ENCODE measurements at regions of chr20 and their contacts with region 1.

Region 1: GRCh38 chr20:36273414-36274180 is 32.5 kb upstream of the DLGAP4 start:
- DNase-seq: peak; percentile 46
- H3K4me3 Mint-ChIP-seq: no peak overlapping the region
- H3K27ac Mint-ChIP-seq: no peak overlapping the region
- H3K4me1 Mint-ChIP-seq: no peaks in the 10 kb centered on the region
- H3K27me3 Mint-ChIP-seq: peaks cover 92% of the 10 kb centered on the region
- CTCF ChIP-seq: peak; percentile 58

Region 2: GRCh38 chr20:36334296-36335205 is 61.0 kb after region 1 on chr20:
- CTCF ChIA-PET with region 1: no interaction called
- intact Hi-C with region 1: no loop called
- DNase-seq: no peak
- H3K4me3 Mint-ChIP-seq: no peak overlapping the region
- H3K27ac Mint-ChIP-seq: no peak overlapping the region
- H3K4me1 Mint-ChIP-seq: no peaks in the 10 kb centered on the region
- H3K27me3 Mint-ChIP-seq: peaks cover 87% of the 10 kb centered on the region
- CTCF ChIP-seq: no peak

Region 3: DNA sequence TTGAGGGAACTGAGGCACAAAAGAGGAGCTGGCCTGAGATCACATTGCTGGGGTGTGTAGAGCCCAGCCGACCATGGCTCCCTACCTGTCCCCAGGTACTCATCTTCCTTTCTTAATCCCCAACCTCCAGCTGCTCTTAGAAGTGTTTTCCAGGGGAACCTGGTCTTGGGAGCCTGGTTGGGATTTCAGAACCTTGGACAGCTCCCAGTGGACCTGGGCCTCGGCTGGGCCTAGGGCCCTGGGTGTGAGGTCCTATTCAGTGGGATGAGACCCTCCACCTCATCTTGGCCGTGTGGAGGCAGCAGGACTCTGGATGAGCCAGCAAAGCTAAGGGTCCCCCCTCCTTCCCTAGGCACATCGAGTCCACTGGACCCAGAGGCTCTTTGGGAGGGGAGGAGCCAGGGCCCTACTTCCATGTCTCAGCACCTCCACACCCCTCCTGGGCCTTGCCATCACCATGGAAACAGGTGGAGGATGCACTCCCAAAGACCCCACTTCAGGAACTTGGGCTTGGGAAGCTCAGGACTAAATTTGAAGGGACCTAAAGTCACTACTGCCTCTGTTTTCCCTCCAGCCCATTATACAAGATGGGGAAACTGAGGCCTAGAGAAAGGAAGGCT is 71.0 kb after region 1 on chr20:
- CTCF ChIA-PET with region 1: no interaction called
- intact Hi-C with region 1: no loop called
- DNase-seq: peak; percentile 67
- H3K4me3 Mint-ChIP-seq: no peak overlapping the region
- H3K27ac Mint-ChIP-seq: no peak overlapping the region
- H3K4me1 Mint-ChIP-seq: no peaks in the 10 kb centered on the region
- H3K27me3 Mint-ChIP-seq: peaks cover 91% of the 10 kb centered on the region
- CTCF ChIP-seq: no peak

Region 4: GRCh38 chr20:36399147-36399968 is 125.8 kb after region 1 on chr20:
- CTCF ChIA-PET with region 1: interaction called, 21 read pairs
- intact Hi-C with region 1: no loop called
- DNase-seq: peak; percentile 77
- H3K4me3 Mint-ChIP-seq: no peak overlapping the region
- H3K27ac Mint-ChIP-seq: no peak overlapping the region
- H3K4me1 Mint-ChIP-seq: no peaks in the 10 kb centered on the region
- H3K27me3 Mint-ChIP-seq: peaks cover 81% of the 10 kb centered on the region
- CTCF ChIP-seq: peak; percentile 36